Sciatic nerve (tissue), 2 donors: ENCODE measurements at regions of chr5 and their contacts with region 1.

Region 1: GRCh38 chr5:38509185-38509584 is 47.3 kb downstream of the LIFR start:
- DNase-seq: no peak
- ATAC-seq: no peak

Region 2: DNA sequence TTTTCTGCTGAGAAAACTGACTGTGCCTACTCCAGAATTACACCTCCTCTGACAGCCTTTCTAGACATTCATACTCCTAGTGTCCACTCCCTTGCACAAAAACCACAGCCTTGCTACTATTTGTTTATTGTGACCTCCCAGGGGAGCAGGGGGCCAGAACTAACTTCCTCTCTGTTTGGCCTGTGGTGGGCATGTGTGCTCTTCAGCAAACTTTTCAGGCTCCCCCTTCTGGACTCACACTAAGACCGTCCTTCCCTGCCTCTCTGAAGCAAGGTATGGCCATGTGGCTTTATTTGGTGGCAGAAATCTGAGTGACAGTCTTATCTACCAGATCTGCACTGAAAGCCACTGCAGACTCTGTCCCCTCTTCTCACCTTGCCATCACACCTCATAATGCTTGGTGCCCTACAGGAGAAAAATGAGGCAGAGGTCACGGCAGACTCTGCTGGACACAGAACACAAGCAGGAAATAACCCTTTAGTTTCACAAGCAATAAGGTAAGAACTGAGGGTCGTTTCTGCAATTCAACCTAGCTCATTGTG is 19.0 kb after region 1 on chr5:
- intact Hi-C with region 1: loop called (anchors 1 kb)
- DNase-seq: no peak
- ATAC-seq: no peak